Common myeloid progenitor, CD34-positive (primary cell): ENCODE measurements at regions of chr7 and their contacts with region 1.

Region 1: DNA sequence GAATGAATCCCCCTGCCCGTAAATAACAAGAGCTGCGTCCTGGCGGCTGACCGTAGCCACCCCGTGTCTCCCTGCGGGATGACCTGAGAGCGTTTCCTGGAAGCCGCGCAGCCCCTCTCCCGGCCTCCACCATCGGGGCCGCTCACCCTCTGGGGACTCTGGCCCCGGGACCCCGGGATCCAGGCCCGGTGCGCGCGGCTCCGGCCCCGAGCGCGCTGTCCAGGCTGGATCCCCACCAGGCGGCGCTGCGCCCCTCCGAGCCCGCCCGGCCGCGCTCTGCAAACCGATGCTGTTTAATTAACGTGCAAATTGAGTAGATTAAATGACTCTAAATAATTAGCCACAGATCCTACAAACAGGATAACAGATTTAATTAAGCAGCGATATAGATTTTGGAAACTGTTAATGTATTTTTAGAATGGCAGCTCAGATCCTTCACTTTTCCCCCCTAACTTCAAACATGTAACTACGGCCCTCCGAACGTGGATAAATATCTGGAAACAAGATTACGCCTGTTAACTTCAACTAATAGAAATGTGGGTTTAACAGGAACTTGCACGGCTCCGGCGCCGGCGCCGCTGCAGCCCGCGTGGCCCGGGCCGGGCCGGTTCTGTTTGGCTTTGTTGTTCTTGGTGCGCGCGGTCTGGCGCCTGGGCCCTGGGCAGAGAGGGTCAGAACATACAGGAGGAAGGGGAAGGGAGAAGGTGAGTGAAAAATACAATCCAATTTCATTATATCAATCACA is 7.1 kb upstream of the UNCX start:
- DNase-seq: peak in 2 of 3 donors; percentile 55 to 60
- H3K4me3 ChIP-seq: no peak overlapping the region
- H3K27ac ChIP-seq: no peak overlapping the region
- H3K4me1 ChIP-seq: peaks cover 0 to 9% (median 5%) of the 10 kb centered on the region in 4 experiments
- H3K27me3 ChIP-seq: peaks cover 3 to 94% (median 61%) of the 10 kb centered on the region in 5 experiments

Region 2: GRCh38 chr7:1144269-1144771 is 81.3 kb before region 1 on chr7:
- CTCF ChIA-PET with region 1: no interaction called
- POLR2A ChIA-PET with region 1: no interaction called
- DNase-seq: peak; percentile 56 to 60 (median 58)
- H3K4me3 ChIP-seq: peak overlapping the region in 1 of 7 experiments; percentile 42
- H3K27ac ChIP-seq: no peak overlapping the region
- H3K4me1 ChIP-seq: peaks cover 0 to 7% (median 2%) of the 10 kb centered on the region in 4 experiments
- H3K27me3 ChIP-seq: no peaks in the 10 kb centered on the region

Region 3: DNA sequence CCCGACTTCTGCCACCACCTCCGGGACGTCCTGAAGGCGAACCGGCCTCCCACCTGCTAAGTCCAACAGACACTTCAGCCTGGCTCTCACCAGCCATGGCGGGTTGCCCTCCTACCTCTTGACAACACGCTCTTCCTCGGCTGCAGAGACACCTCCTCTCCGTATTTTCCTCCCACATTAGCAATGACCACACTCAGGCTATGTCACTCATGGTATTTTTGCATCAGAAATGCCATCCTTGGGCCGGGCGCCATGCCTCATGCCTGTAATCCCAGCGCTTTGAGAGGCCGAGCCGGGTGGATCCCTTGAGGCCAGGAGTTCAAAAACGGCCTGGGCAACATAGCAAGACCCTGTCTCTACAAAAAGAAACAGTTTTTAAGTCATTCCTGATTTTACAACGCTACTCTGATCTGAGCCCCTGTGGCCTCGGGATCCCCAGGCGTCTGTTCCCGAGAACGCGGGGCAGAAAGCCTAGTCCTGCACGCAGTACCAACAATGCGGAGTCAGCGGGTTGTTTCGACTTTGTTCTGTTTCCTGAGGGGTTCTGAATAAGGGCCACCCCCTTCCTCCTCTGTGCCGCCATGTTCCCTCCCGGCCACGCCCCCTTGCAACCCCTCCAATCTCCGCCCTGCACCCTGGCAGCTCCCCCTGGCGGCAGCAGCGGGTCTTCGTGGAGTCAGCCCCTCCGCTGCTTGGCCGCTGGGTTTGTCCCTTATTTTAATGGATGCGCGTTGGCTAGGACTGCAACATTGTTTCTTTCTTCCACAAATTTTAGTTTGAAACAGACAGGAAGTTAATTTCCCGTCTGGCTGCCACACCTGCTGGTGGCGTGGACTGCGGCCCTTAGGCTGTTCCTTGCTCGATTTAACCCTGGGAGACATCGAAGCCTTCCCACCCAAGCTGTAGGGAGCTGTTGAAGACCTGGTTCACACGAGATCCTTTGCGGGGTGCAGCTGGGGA is 55.9 kb before region 1 on chr7:
- CTCF ChIA-PET with region 1: no interaction called
- POLR2A ChIA-PET with region 1: no interaction called
- DNase-seq: peak; percentile 91 to 96 (median 94)
- H3K4me3 ChIP-seq: peak overlapping the region in 6 of 7 experiments; percentile 21 to 85 (median 71)
- H3K27ac ChIP-seq: peak overlapping the region in 1 of 2 experiments; percentile 34
- H3K4me1 ChIP-seq: peaks cover 0 to 13% (median 10%) of the 10 kb centered on the region in 4 experiments
- H3K27me3 ChIP-seq: no peaks in the 10 kb centered on the region

Region 4: GRCh38 chr7:1240517-1241257 is 15.1 kb after region 1 on chr7:
- CTCF ChIA-PET with region 1: interaction called, 29 read pairs
- POLR2A ChIA-PET with region 1: no interaction called
- DNase-seq: no peak
- H3K4me3 ChIP-seq: no peak overlapping the region
- H3K27ac ChIP-seq: no peak overlapping the region
- H3K4me1 ChIP-seq: peaks cover 0 to 10% (median 3%) of the 10 kb centered on the region in 4 experiments
- H3K27me3 ChIP-seq: peaks cover 4 to 99% (median 47%) of the 10 kb centered on the region in 5 experiments

Region 5: DNA sequence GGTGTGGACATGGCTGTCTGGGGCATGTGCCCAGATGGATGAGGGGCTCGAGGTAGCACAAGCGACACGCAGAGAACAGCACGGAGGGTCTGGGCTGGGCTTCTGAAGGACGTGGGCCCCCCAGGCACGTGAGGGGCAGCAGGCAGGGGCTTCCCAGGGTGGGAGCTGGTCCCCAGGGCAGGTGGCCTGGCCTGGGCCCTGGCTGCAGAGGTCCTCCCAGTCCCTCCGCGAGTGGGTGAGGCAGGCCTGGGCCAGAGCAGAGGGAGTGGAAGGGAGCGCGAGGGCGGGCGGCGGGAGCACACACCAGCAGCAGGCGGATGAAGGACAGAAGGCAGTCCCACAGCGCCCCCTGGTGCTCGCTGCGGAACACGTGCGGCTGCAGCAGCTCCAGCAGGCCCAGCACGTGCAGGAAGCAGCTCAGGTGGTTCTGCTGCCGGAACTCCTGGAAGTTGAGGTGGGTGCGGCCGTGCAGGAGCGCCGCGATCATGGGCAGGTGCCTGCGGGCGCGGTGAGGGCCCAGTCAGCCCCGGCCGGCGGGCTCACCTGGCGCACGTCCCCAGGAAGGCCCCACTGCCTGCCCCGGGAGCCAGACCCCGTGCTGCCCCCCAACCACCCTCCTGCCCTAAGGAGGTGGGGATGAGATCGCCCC is 248.4 kb after region 1 on chr7:
- CTCF ChIA-PET with region 1: interaction called, 17 read pairs
- POLR2A ChIA-PET with region 1: no interaction called
- DNase-seq: peak; percentile 80 to 89 (median 87)
- H3K4me3 ChIP-seq: no peak overlapping the region
- H3K27ac ChIP-seq: no peak overlapping the region
- H3K4me1 ChIP-seq: peaks cover 0 to 6% (median 5%) of the 10 kb centered on the region in 4 experiments
- H3K27me3 ChIP-seq: no peaks in the 10 kb centered on the region